ENCODE measurements at regions of chrX and their contacts with region 1.

Region 1: GRCh38 chrX:40175511-40176350 is 78.0 kb upstream of the BCOR start:
- DNase-seq: peak; percentile 63 to 90 (median 78)
- ATAC-seq: peak; percentile 46
- H3K4me3 ChIP-seq: peak overlapping the region; percentile 73
- H3K4me3 Mint-ChIP-seq: peak overlapping the region; percentile 97
- H3K27ac ChIP-seq: peak overlapping the region; percentile 90 to 96
- H3K27ac Mint-ChIP-seq: peak overlapping the region; percentile 100
- H3K4me1 ChIP-seq: peaks cover 59% of the 10 kb centered on the region
- H3K4me1 Mint-ChIP-seq: peaks cover 42% of the 10 kb centered on the region
- H3K27me3 ChIP-seq: no peaks in the 10 kb centered on the region
- H3K27me3 Mint-ChIP-seq: no peaks in the 10 kb centered on the region
- CTCF ChIP-seq: no peak

Region 2: GRCh38 chrX:39772057-39772832 is 403.5 kb before region 1 on chrX:
- CTCF ChIA-PET with region 1: no interaction called
- POLR2A ChIA-PET with region 1: interaction called, 10 read pairs
- intact Hi-C with region 1: no loop called
- DNase-seq: peak; percentile 4 to 77 (median 58)
- ATAC-seq: peak; percentile 57
- H3K4me3 ChIP-seq: no peak overlapping the region
- H3K4me3 Mint-ChIP-seq: peak overlapping the region; percentile 57
- H3K27ac ChIP-seq: peak overlapping the region; percentile 59 to 64
- H3K27ac Mint-ChIP-seq: peak overlapping the region; percentile 99
- H3K4me1 ChIP-seq: peaks cover 60% of the 10 kb centered on the region
- H3K4me1 Mint-ChIP-seq: peaks cover 57% of the 10 kb centered on the region
- H3K27me3 ChIP-seq: no peaks in the 10 kb centered on the region
- H3K27me3 Mint-ChIP-seq: no peaks in the 10 kb centered on the region
- CTCF ChIP-seq: no peak

Region 3: GRCh38 chrX:39859991-39860861 is 315.5 kb before region 1 on chrX:
- CTCF ChIA-PET with region 1: no interaction called
- POLR2A ChIA-PET with region 1: interaction called, 11 read pairs
- intact Hi-C with region 1: loop called in 1 of 2 experiments (anchors 1 kb)
- DNase-seq: peak in 13 of 14 experiments; percentile 34 to 82 (median 63)
- ATAC-seq: peak; percentile 41
- H3K4me3 ChIP-seq: no peak overlapping the region
- H3K4me3 Mint-ChIP-seq: peak overlapping the region; percentile 30
- H3K27ac ChIP-seq: no peak overlapping the region
- H3K27ac Mint-ChIP-seq: peak overlapping the region; percentile 87
- H3K4me1 ChIP-seq: peaks cover 40% of the 10 kb centered on the region
- H3K4me1 Mint-ChIP-seq: peaks cover 28% of the 10 kb centered on the region
- H3K27me3 ChIP-seq: no peaks in the 10 kb centered on the region
- H3K27me3 Mint-ChIP-seq: no peaks in the 10 kb centered on the region
- CTCF ChIP-seq: no peak

Region 4: DNA sequence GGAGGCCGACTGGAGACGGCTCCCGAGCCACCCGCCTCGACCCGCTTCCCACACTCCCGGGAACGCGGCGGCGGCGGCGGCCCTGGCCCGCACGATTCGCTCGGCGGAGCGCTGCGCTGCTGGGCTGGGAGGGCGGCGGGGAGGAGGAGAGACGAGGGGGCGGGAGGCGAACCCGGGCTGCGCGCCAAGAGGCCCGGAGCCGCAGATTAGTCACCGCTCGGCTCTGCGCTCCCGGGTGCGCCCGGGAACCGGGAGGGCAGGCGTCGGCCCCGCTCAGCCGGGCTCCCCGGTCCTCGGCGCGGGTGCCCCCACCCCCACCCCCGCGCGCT is 66.8 kb before region 1 on chrX:
- CTCF ChIA-PET with region 1: no interaction called
- POLR2A ChIA-PET with region 1: interaction called, 19 read pairs
- intact Hi-C with region 1: no loop called
- DNase-seq: peak in 12 of 14 experiments; percentile 40 to 86 (median 66)
- ATAC-seq: peak; percentile 43
- H3K4me3 ChIP-seq: peak overlapping the region; percentile 42
- H3K4me3 Mint-ChIP-seq: no peak overlapping the region
- H3K27ac ChIP-seq: no peak overlapping the region
- H3K27ac Mint-ChIP-seq: no peak overlapping the region
- H3K4me1 ChIP-seq: peaks cover 32% of the 10 kb centered on the region
- H3K4me1 Mint-ChIP-seq: peaks cover 4% of the 10 kb centered on the region
- H3K27me3 ChIP-seq: peaks cover 0 to 1% of the 10 kb centered on the region in 2 experiments
- H3K27me3 Mint-ChIP-seq: no peaks in the 10 kb centered on the region
- CTCF ChIP-seq: no peak

Region 5: DNA sequence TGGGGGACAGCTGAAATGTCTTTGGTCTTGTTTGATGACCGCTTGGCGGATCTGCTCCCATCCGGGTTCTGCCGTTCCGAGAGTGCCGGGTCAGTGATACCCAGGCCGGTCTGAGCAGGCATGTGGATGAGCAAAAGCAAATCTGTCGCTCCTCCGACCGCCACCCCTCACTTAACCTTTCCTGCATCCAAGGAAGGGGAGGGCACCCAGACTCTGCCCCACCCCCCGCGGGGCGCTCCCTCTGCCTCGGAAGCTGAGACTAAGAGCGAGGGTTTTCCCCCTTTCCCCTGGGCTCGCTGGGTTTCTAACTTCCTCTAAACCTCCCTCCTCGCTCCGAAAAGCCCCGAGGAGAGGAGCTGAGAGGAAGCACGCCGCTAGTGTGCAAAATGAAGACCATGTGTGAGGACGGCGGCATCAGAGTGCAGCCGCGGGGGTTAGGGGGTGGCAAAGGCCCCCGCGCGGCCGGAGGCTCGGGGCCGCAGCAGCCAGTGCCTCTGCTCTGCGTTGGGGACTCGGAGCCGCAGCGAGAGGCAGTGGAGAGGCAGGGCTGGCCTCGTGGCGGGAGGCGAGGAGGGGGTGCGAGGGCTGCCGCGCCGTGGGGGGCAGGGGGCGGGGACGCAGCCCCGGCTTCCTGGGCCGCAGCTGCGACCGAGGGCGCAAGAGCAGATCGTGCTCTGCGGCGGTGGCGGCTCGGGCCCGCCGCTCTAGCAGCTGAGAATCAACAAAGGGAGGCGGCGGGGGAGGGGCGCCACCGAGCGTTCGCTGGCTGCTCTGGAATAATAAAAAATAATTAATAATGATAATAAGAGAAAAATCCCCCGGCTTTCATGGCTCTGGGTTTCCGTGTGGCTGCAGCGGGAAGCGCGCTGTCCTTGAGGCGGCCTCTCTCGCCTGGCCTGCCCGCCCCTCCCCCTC is 22.1 kb before region 1 on chrX:
- CTCF ChIA-PET with region 1: interaction called, 3 read pairs
- POLR2A ChIA-PET with region 1: interaction called, 41 read pairs
- intact Hi-C with region 1: no loop called
- DNase-seq: peak in 9 of 14 experiments; percentile 37 to 85 (median 57)
- ATAC-seq: peak; percentile 62
- H3K4me3 ChIP-seq: peak overlapping the region; percentile 55
- H3K4me3 Mint-ChIP-seq: peak overlapping the region; percentile 92
- H3K27ac ChIP-seq: no peak overlapping the region
- H3K27ac Mint-ChIP-seq: peak overlapping the region; percentile 55
- H3K4me1 ChIP-seq: peaks cover 44% of the 10 kb centered on the region
- H3K4me1 Mint-ChIP-seq: peaks cover 11% of the 10 kb centered on the region
- H3K27me3 ChIP-seq: no peaks in the 10 kb centered on the region
- H3K27me3 Mint-ChIP-seq: no peaks in the 10 kb centered on the region
- CTCF ChIP-seq: no peak

Region 6: GRCh38 chrX:40237731-40238178 is 62.0 kb after region 1 on chrX:
- CTCF ChIA-PET with region 1: no interaction called
- POLR2A ChIA-PET with region 1: no interaction called
- intact Hi-C with region 1: no loop called
- DNase-seq: peak in 1 of 14 experiments; percentile 3
- ATAC-seq: no peak
- H3K4me3 ChIP-seq: no peak overlapping the region
- H3K4me3 Mint-ChIP-seq: no peak overlapping the region
- H3K27ac ChIP-seq: no peak overlapping the region
- H3K27ac Mint-ChIP-seq: no peak overlapping the region
- H3K4me1 ChIP-seq: no peaks in the 10 kb centered on the region
- H3K4me1 Mint-ChIP-seq: no peaks in the 10 kb centered on the region
- H3K27me3 ChIP-seq: no peaks in the 10 kb centered on the region
- H3K27me3 Mint-ChIP-seq: no peaks in the 10 kb centered on the region
- CTCF ChIP-seq: no peak

Region 7: DNA sequence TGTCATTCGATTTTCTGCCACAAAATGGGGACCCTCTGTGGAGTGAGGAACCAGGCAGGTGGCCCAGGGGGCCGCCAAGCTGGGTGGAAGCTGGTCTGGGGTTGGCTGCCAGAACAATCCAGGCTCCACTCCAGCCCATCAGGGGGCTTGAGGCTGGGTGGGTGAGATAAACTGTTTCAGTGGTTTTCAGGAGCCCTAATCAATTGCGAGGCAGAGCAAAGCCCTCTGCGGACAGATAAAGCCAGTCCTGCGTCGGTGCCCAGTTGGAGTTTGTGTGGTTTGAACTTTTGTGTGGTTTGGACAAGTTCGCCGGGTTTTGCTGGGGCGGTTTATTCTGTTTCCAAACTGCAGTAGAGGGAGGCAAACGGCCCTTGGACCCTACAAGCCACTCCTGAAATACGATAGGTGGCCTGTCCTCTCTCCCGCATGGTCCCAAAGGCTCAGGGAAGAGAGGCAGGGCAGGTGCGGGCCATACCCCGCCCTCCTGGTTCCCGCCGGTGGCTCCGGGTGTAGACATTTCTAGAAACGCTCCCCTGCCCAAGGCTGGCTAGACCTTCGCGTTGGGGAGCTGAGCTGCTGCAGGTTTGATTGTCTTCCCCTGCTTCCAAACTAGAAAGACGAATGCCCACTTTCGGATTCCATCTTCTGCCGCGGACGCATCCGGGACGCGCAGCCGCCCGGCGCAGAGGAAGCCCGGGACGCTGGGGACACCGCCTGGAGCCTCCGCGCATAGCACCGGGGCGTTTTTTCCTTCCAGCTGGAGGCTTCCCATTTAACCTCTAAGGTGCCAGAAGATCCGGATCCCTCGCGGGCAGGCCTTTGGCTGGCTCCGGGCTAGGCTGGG is 91.0 kb after region 1 on chrX:
- CTCF ChIA-PET with region 1: interaction called, 3 read pairs
- POLR2A ChIA-PET with region 1: interaction called, 12 read pairs
- intact Hi-C with region 1: loop called in 1 of 2 experiments (anchors 10 kb)
- DNase-seq: peak; percentile 15 to 74 (median 42)
- ATAC-seq: peak; percentile 83
- H3K4me3 ChIP-seq: peak overlapping the region; percentile 67
- H3K4me3 Mint-ChIP-seq: peak overlapping the region; percentile 85
- H3K27ac ChIP-seq: no peak overlapping the region
- H3K27ac Mint-ChIP-seq: no peak overlapping the region
- H3K4me1 ChIP-seq: peaks cover 14% of the 10 kb centered on the region
- H3K4me1 Mint-ChIP-seq: peaks cover 6% of the 10 kb centered on the region
- H3K27me3 ChIP-seq: no peaks in the 10 kb centered on the region
- H3K27me3 Mint-ChIP-seq: no peaks in the 10 kb centered on the region
- CTCF ChIP-seq: peak; percentile 67